ENCODE measurements at regions of chr19 and their contacts with region 1.

Region 1: GRCh38 chr19:49580264-49581006 is at the start of gene NOSIP:
- DNase-seq: peak; percentile 88 to 98 (median 96)
- ATAC-seq: peak; percentile 98 to 99
- H3K4me3 Mint-ChIP-seq: peak within 1 kb of the TSS; percentile 90 to 98 (median 94)
- H3K27ac Mint-ChIP-seq: peak within 1 kb of the TSS; percentile 89 to 97 (median 93)
- H3K4me1 Mint-ChIP-seq: peaks cover 14 to 44% (median 36%) of the 10 kb centered on the region in 4 donors
- H3K27me3 Mint-ChIP-seq: no peaks in the 10 kb centered on the region
- polyA plus RNA-seq, gene NOSIP: 662 to 854 (median 844) TPM

Region 2: GRCh38 chr19:49497047-49497788 is 83.2 kb before region 1 on chr19:
- POLR2A ChIA-PET with region 1: interaction called, 14 read pairs
- DNase-seq: peak; percentile 51 to 87 (median 72)
- ATAC-seq: peak; percentile 3 to 5
- H3K4me3 Mint-ChIP-seq: peak overlapping the region; percentile 96 to 100 (median 100)
- H3K27ac Mint-ChIP-seq: peak overlapping the region; percentile 96 to 100 (median 99)
- H3K4me1 Mint-ChIP-seq: peaks cover 18 to 79% (median 66%) of the 10 kb centered on the region in 4 donors
- H3K27me3 Mint-ChIP-seq: peaks cover 0 to 2% (median 0%) of the 10 kb centered on the region in 5 donors

Region 3: DNA sequence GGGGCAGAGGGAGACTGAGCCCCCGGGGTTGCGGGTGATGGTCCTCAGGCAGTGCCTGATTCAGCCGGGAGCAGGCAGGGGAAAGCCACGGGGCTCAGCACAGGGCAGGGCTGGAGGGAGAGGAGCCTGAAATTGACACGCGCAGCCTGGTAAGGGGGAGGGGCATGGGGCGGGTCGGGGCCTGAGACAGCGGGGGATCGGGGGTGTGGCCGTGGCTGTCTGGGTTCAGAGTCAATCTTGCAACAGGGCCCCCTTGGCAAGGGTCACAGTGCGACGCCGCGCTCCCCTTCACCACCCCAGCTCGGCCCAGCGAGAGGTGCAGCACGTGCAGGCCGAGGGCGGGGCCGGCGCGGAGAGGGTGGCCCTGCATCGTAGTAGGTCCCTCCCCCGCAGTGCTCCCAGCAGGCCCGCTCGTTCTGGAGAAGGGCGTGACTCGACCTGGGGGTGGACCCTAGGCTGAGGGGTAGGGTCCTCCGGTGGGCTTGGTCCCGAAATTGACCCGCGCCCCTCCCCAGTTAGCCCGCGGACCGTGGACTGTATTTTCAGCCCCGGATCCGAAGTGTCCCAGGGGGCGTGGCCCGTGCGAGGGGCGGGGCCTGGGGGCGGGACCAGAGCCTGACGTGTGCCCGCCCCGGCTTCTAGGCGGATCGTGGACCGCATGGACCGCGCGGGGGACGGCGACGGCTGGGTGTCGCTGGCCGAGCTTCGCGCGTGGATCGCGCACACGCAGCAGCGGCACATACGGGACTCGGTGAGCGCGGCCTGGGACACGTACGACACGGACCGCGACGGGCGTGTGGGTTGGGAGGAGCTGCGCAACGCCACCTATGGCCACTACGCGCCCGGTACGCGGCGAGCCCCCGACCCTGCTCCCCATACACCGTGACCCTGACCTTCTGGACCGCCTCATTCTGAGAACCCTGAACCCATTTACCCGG is 46.6 kb before region 1 on chr19:
- POLR2A ChIA-PET with region 1: no interaction called
- DNase-seq: peak; percentile 73 to 97 (median 87)
- ATAC-seq: peak; percentile 92 to 93
- H3K4me3 Mint-ChIP-seq: peak overlapping the region; percentile 77 to 93 (median 88)
- H3K27ac Mint-ChIP-seq: peak overlapping the region in 8 of 10 donors; percentile 48 to 91 (median 80)
- H3K4me1 Mint-ChIP-seq: peaks cover 16 to 28% (median 25%) of the 10 kb centered on the region in 4 donors
- H3K27me3 Mint-ChIP-seq: no peaks in the 10 kb centered on the region

Region 4: DNA sequence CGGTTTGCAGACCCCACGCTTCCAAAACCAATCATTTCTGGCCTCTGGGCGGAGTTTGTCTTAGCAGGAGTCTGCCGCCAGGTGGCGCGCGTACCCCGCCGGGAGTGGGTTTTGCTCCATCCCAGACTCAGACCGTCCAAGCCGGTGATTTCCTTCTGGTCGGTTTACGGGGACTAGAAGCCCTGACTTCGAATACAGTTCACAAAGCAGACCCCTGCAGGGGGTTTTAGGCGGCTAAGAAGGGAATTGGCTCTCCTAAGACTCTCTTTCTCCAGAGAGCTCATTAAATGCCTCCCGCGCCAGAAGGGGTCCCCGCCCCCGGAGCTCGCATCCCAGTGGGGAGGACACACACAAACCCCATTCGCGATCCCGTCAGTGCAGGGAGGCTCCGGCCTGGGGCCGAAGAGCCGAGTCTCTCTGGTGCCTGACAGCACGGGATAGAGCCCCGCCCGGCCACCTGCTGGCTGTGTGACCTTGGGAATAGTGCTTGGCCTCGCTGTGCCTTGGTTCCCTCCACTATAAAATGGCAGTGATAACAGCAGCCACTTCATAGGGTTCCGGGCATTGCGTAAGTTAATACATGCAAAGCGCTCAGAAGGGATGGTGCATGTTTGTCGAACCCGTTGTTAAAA is 357.4 kb after region 1 on chr19:
- POLR2A ChIA-PET with region 1: no interaction called
- DNase-seq: peak; percentile 47 to 82 (median 74)
- ATAC-seq: peak; percentile 57 to 71
- H3K4me3 Mint-ChIP-seq: peak overlapping the region in 3 of 10 donors; percentile 7 to 54 (median 19)
- H3K27ac Mint-ChIP-seq: no peak overlapping the region
- H3K4me1 Mint-ChIP-seq: peaks cover 7 to 29% (median 18%) of the 10 kb centered on the region in 4 donors
- H3K27me3 Mint-ChIP-seq: no peaks in the 10 kb centered on the region

Measured in naive thymus-derived CD8-positive, alpha-beta T cell (primary cell).